ENCODE measurements at regions of chr3 and their contacts with region 1.

Region 1: DNA sequence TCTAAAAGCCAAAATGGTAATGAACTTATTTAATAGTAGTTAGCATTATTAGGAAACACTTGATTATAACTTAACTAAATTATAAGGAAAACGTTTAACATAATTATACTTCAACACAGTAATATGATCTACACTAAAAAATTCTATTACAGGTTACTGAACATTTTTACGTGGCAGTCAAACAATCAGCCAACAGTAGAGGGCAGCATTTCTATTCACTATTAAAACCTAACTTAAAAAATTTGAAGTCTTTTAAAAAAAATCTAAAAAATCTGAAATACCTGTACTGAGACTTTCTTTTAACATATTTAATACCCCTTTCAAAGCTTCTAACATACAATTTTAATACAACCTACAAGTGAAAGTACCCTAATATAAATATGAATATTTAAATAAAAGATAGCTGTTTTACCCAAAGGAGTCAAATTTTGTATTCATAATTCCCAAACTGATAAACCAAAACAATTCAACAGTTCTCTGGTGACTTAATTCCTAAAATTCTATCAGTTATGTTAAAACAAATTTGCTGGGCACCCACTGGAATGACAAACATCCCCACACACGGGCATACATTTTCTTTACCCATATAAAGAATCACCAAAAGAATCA is 41.5 kb downstream of the DLG1 start:
- DNase-seq: no peak
- ATAC-seq: 0 out of 3 replicates have a peak, but pooled peaks have one; percentile 38
- H3K4me3 ChIP-seq: no peak overlapping the region
- H3K27ac ChIP-seq: no peak overlapping the region
- H3K4me1 ChIP-seq: no peaks in the 10 kb centered on the region
- H3K27me3 ChIP-seq: no peaks in the 10 kb centered on the region
- CTCF ChIP-seq: peak; percentile 40 to 60 (median 56); a peak in 5 of 6 replicates
- EP300 ChIP-seq: no peak
- POLR2A ChIP-seq: no peak
- RAD21 ChIP-seq: peak; percentile 70

Region 2: DNA sequence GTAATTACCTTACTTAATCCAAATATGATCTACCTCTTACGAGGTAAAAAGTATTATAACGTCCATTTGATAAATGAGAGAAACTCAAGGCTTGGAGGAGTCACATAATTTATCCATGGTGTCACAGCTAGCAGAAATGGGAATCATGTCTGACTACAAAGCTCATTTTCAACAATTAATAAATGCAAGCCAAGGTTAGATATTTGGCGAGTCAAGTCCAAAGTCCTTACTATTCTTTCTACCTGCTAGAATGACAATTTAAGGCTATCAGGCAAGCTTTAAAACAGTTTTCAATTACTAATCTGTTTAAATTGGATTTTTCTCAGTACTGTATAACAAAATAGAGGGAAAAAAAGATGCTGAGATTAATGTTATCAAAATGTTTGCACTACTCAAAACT is 27.1 kb before region 1 on chr3:
- CTCF ChIA-PET with region 1: interaction called, 101 read pairs
- POLR2A ChIA-PET with region 1: no interaction called
- RAD21 ChIA-PET with region 1: interaction called, 27 read pairs
- SMC1A ChIA-PET with region 1: interaction called, 35 read pairs
- in situ Hi-C with region 1: no loop called
- intact Hi-C with region 1: no loop called
- DNase-seq: no peak
- ATAC-seq: no peak
- H3K4me3 ChIP-seq: no peak overlapping the region
- H3K27ac ChIP-seq: no peak overlapping the region
- H3K4me1 ChIP-seq: peaks cover 6% of the 10 kb centered on the region; the same call in 1 of the 2 replicates
- H3K27me3 ChIP-seq: no peaks in the 10 kb centered on the region
- CTCF ChIP-seq: no peak
- EP300 ChIP-seq: no peak
- POLR2A ChIP-seq: no peak
- RAD21 ChIP-seq: no peak

Region 3: GRCh38 chr3:197270558-197271317 is 13.8 kb after region 1 on chr3:
- CTCF ChIA-PET with region 1: interaction called, 40 read pairs
- POLR2A ChIA-PET with region 1: interaction called, 3 read pairs
- RAD21 ChIA-PET with region 1: interaction called, 17 read pairs
- SMC1A ChIA-PET with region 1: interaction called, 21 read pairs
- in situ Hi-C with region 1: no loop called
- intact Hi-C with region 1: no loop called
- DNase-seq: no peak
- ATAC-seq: no peak
- H3K4me3 ChIP-seq: no peak overlapping the region
- H3K27ac ChIP-seq: no peak overlapping the region
- H3K4me1 ChIP-seq: no peaks in the 10 kb centered on the region
- H3K27me3 ChIP-seq: no peaks in the 10 kb centered on the region
- CTCF ChIP-seq: no peak
- EP300 ChIP-seq: no peak
- POLR2A ChIP-seq: no peak
- RAD21 ChIP-seq: no peak

Region 4: DNA sequence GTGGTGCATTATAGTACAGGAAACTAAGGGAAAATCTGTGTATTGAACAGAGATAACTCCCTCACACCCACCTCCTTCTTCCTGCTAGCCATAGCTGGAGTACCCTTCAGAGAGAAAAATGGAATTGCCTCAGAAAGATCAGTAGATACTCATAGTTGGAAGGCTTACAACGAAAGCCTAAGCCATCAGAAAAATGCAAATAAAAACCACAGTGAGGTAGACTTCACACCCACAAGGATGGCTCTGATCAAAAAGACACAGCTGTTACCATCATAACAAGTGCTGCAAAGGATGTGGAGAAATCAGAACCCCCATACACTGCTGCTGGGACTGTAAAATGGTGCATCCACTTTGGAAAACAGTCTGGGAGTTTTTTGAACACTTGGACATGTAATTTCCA is 48.9 kb after region 1 on chr3:
- CTCF ChIA-PET with region 1: interaction called, 11 read pairs
- POLR2A ChIA-PET with region 1: no interaction called
- RAD21 ChIA-PET with region 1: interaction called, 9 read pairs
- SMC1A ChIA-PET with region 1: interaction called, 5 read pairs
- in situ Hi-C with region 1: no loop called
- intact Hi-C with region 1: no loop called
- DNase-seq: peak; percentile 75
- ATAC-seq: peak; percentile 96
- H3K4me3 ChIP-seq: no peak overlapping the region
- H3K27ac ChIP-seq: no peak overlapping the region
- H3K4me1 ChIP-seq: peaks cover 19% of the 10 kb centered on the region
- H3K27me3 ChIP-seq: no peaks in the 10 kb centered on the region; a peak in 2 of 4 replicates
- CTCF ChIP-seq: no peak
- EP300 ChIP-seq: peak; percentile 76 to 91; a peak in 2 of 4 replicates
- POLR2A ChIP-seq: no peak
- RAD21 ChIP-seq: 0 out of 2 replicates have a peak, but pooled peaks have one; percentile 8

Region 5: GRCh38 chr3:197456261-197457091 is 199.5 kb after region 1 on chr3:
- CTCF ChIA-PET with region 1: interaction called, 98 read pairs
- POLR2A ChIA-PET with region 1: interaction called, 4 read pairs
- RAD21 ChIA-PET with region 1: interaction called, 54 read pairs
- SMC1A ChIA-PET with region 1: interaction called, 52 read pairs
- in situ Hi-C with region 1: loop called (anchors 5 kb)
- intact Hi-C with region 1: loop called (anchors 5 kb)
- DNase-seq: no peak
- ATAC-seq: peak; percentile 85
- H3K4me3 ChIP-seq: peak overlapping the region; percentile 82
- H3K27ac ChIP-seq: peak overlapping the region; percentile 58
- H3K4me1 ChIP-seq: no peaks in the 10 kb centered on the region
- H3K27me3 ChIP-seq: no peaks in the 10 kb centered on the region
- CTCF ChIP-seq: no peak
- EP300 ChIP-seq: no peak
- POLR2A ChIP-seq: peak; percentile 79
- RAD21 ChIP-seq: no peak

Region 6: GRCh38 chr3:197501879-197502620 is 245.1 kb after region 1 on chr3:
- CTCF ChIA-PET with region 1: interaction called, 141 read pairs
- POLR2A ChIA-PET with region 1: no interaction called
- RAD21 ChIA-PET with region 1: interaction called, 86 read pairs
- SMC1A ChIA-PET with region 1: interaction called, 89 read pairs
- in situ Hi-C with region 1: loop called (anchors 5 kb)
- intact Hi-C with region 1: loop called (anchors 1 kb)
- DNase-seq: peak; percentile 57
- ATAC-seq: peak; percentile 97
- H3K4me3 ChIP-seq: no peak overlapping the region
- H3K27ac ChIP-seq: peak overlapping the region; percentile 63
- H3K4me1 ChIP-seq: peaks cover 19% of the 10 kb centered on the region
- H3K27me3 ChIP-seq: no peaks in the 10 kb centered on the region
- CTCF ChIP-seq: peak; percentile 67 to 81 (median 78)
- EP300 ChIP-seq: no peak
- POLR2A ChIP-seq: no peak
- RAD21 ChIP-seq: peak; percentile 93

Measured in GM12878 (cell line).